AG04449 (cell line): ENCODE measurements at regions of chr7 and their contacts with region 1.

Region 1: DNA sequence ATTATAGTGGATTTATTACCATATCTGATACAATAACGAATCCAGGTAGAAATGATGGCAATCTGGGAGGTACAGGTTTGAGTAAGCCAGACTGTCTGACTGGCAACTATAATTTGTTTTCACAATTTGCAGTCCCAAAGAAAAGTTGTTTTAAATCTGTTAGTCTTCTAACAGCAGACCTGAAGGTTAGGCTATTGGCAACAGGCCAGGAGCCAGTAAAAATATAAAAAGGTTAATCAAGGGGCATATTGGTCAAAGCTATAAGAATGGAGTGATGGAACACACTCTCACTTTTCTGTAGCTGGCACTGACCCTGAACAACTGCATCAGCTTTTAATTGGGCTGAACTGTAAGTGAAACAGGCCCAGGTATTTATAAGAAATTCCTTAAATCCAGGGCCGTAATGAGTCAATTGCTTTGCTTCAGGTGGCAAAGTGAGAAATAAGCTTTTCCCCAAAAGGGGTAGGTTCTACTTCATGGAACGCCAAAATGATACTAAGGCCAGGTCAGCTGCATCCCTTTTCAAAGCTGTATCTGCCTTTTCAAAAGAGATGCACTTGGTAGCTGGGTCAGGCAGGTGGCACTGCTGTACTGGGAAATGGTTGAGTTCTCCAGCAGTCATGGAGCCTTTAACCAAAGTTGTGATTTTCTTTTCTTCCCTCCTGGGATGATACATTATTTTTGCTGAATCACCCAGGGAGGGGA is 7.0 kb upstream of the GPR22 start:
- DNase-seq: no peak
- H3K4me3 ChIP-seq: no peak overlapping the region
- CTCF ChIP-seq: peak; percentile 79

Region 2: GRCh38 chr7:107501593-107501992 is 38.7 kb after region 1 on chr7:
- CTCF ChIA-PET with region 1: interaction called, 11 read pairs
- POLR2A ChIA-PET with region 1: no interaction called
- DNase-seq: no peak
- H3K4me3 ChIP-seq: no peak overlapping the region
- CTCF ChIP-seq: peak; percentile 17

Region 3: GRCh38 chr7:107528466-107528865 is 65.6 kb after region 1 on chr7:
- CTCF ChIA-PET with region 1: no interaction called
- POLR2A ChIA-PET with region 1: no interaction called
- DNase-seq: peak; percentile 23
- H3K4me3 ChIP-seq: no peak overlapping the region
- CTCF ChIP-seq: no peak

Region 4: DNA sequence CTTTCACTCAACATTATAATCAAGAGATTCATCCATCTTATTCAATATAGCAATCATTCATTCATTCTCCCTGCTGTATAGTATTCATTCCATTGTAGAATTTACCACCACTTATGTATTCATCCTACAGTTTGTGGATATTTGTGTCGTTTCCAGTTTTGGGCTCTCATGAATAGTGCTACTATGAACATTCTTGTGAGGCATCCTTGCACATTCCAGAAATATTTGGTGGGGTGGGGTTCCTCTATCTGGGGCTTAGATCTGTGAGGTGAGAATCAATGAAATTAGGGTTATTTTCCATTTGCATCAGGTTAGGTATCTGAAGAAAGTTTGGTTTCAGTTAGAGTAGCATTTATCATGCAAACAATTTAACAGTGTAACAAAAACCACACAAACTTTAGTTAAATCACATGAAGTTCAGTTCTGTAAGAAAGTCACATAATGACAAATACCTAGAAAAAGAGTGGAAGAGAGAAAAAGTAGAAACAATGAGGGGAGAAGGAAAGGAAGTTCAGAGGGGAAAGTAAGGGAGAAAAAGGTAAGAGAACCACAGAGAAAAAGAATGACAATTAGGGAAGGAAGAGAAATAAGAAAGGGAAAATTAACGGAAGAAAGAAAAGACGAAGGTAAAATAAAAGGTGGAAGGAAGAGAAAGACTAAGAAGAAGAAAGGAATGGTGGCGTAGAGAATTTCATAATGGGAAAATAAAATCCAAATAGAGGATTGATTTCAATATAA is 255.7 kb after region 1 on chr7:
- CTCF ChIA-PET with region 1: interaction called, 106 read pairs
- POLR2A ChIA-PET with region 1: no interaction called
- DNase-seq: no peak
- H3K4me3 ChIP-seq: no peak overlapping the region
- CTCF ChIP-seq: no peak

Region 5: DNA sequence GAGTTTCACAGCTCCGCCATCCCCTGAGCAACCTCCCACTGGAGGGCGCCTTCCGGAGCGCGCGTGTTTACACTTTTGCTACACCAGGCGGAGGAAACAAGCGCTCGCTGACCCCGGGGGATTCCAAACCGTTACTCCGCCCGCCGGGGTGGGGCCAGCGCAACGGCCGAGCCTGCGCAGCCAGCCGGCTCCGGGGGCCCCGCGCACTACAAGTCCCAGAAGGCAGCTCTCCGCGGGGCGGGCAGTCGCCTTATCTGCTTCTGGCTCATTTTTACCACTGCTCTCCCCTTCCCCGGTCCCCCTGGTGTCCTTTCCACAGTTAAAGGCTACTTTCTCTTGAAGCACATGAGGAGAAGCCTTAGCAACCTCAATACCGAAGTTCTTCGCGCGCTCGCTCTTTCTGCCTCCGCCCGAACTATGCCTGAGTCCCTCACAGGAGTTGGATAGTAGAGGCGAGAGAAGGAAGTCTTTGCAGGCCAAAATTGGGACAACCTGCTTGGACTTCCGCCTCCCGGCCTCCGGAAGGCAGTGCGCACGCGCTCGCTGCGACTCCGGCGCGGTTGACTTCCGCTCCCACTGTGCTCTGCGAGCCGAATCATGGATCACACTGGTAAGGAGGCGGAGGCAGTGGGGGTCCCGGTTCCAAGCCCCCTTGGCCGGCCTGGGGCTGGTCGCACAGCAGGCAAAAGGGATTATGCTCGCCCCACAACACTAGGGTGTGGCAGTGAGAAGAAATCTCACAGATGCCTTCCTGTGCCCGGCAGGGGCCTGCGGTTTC is 280.9 kb after region 1 on chr7 and contains the start of gene CBLL1:
- CTCF ChIA-PET with region 1: interaction called, 26 read pairs
- POLR2A ChIA-PET with region 1: no interaction called
- DNase-seq: peak; percentile 63
- H3K4me3 ChIP-seq: peak within 1 kb of the TSS; percentile 98
- CTCF ChIP-seq: peak; percentile 89